Ovary (tissue), 10 donors: ENCODE measurements at regions of chr14 and their contacts with region 1.

Region 1: DNA sequence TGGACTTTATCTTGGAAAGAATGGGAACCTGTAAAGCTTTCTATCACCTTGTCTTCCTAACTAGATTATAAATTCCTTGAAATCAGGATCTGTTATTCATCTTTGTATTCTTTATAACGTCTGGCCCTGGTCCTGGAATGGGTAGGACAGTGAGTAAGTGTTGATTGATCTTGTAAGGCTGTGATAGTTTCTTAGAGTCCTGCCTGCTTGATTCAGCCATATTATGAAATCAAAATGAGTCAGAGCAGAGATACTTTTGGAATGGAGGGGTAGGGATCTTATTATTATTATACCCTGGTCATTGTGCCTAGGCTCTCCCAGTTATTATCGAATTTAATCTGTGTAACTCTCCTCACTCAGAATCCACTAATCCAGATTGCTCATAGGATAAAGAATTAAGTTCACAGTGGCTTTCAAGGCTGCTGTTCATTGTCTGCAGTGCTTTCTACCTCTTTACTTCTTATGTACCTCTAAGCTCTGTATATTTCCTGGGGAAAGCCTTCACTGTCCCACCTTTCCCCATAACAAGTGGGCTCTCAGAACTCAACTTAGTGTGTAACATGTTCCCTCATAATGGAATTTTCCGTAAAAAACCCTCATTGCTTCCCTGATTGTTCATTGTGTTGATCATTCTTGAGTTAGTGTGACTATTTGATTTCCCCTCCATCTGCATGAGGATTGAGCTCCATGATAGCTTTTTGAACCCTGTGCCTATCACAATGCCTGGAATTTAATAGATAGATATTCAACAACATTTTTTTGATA is 93.3 kb downstream of the DAAM1 start:
- DNase-seq: no peak
- H3K4me3 ChIP-seq: no peak overlapping the region
- H3K27ac ChIP-seq: no peak overlapping the region
- H3K4me1 ChIP-seq: peaks cover 4% of the 10 kb centered on the region
- H3K27me3 ChIP-seq: no peaks in the 10 kb centered on the region
- CTCF ChIP-seq: no peak
- EP300 ChIP-seq: no peak
- POLR2A ChIP-seq: no peak

Region 2: GRCh38 chr14:59228421-59228820 is 53.4 kb before region 1 on chr14:
- intact Hi-C with region 1: loop called in 1 of 4 experiments (anchors 2 kb)
- DNase-seq: no peak
- H3K4me3 ChIP-seq: no peak overlapping the region
- H3K27ac ChIP-seq: no peak overlapping the region
- H3K4me1 ChIP-seq: peaks cover 3% of the 10 kb centered on the region
- H3K27me3 ChIP-seq: no peaks in the 10 kb centered on the region
- CTCF ChIP-seq: no peak
- EP300 ChIP-seq: no peak
- POLR2A ChIP-seq: no peak

Region 3: DNA sequence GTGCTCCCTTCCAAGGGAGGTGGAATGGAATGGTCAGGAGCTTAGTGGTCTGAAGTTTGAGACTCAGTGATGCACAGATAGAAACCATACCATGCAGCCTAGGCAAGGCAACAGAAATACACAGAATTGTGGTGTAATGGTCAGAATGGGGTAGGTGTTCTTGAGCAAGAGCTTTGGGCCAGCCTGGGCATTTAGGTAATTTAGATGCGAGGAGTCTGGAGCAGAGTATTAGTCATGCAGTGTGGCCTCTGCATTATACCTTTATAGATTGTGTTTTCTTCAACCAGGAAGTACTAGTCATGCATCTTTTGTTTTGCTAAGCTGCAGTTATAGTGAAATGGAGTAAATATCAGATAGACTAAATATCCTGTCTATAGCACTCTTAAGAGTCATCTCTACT is 25.0 kb after region 1 on chr14:
- intact Hi-C with region 1: no loop called
- DNase-seq: no peak
- H3K4me3 ChIP-seq: no peak overlapping the region
- H3K27ac ChIP-seq: no peak overlapping the region
- H3K4me1 ChIP-seq: peaks cover 3% of the 10 kb centered on the region
- H3K27me3 ChIP-seq: no peaks in the 10 kb centered on the region
- CTCF ChIP-seq: no peak
- EP300 ChIP-seq: no peak
- POLR2A ChIP-seq: no peak

Region 4: GRCh38 chr14:59422069-59422881 is 140.5 kb after region 1 on chr14:
- intact Hi-C with region 1: no loop called
- DNase-seq: no peak
- H3K4me3 ChIP-seq: no peak overlapping the region
- H3K27ac ChIP-seq: no peak overlapping the region
- H3K4me1 ChIP-seq: peaks cover 8% of the 10 kb centered on the region
- H3K27me3 ChIP-seq: no peaks in the 10 kb centered on the region
- CTCF ChIP-seq: no peak
- EP300 ChIP-seq: no peak
- POLR2A ChIP-seq: no peak

Region 5: DNA sequence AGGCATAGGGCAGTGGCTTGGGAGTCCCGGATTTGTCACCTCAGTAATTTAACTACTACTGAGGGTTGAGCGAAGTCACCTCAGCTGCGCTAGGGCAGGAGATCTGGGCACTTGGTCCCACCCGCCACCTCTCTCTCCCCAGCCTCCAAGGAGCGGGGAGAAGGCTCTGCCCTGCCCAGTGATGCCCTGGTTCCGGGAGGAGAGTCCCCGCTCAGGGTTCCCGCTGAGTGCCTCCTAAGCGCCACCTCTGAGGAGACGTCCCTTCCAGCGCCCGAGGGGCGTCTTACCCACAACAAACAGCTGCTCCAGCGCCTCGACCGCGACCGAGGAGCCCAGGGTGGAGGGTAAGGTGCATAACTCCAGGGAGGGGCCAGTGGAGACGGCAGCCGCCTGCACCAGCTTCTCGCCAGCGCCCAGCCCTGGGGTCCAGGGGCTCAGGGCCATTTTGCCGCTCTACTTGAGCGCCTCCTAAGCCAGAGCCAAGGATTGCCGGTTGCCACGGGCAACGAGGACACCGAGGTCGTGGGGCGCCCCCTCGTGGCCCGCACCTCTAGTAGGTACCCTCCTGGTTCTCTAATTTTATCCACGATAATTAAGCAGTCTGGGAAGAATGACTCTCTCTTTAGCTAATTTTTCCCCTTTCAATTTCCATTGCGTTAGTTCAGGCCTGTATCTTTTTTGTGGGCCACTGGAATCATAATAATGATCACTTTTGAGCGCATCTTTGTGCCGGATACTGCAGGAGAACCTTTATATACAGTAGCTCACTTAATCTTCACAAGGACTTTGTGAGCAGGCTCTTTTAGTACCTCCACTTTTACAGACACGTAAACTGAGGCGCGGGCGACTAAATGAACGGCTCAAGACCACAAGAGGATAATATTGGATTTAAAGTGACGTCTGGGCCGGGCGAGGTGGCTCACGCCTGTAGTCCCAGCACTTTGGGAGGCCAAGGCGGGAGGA is 294.8 kb after region 1 on chr14 and contains the start of gene CCDC175:
- intact Hi-C with region 1: no loop called
- DNase-seq: peak; percentile 17 to 64 (median 38)
- H3K4me3 ChIP-seq: peak within 1 kb of the TSS; percentile 27
- H3K27ac ChIP-seq: no peak within 1 kb of the TSS
- H3K4me1 ChIP-seq: no peaks in the 10 kb centered on the region
- H3K27me3 ChIP-seq: no peaks in the 10 kb centered on the region
- CTCF ChIP-seq: no peak
- EP300 ChIP-seq: no peak
- POLR2A ChIP-seq: no peak
- total RNA-seq, gene CCDC175: 0.34 TPM in 1 of 7 donors, not detected in the others